Right ventricle myocardium inferior (tissue), 1 donor: ENCODE measurements at regions of chr1 and their contacts with region 1.

Region 1: DNA sequence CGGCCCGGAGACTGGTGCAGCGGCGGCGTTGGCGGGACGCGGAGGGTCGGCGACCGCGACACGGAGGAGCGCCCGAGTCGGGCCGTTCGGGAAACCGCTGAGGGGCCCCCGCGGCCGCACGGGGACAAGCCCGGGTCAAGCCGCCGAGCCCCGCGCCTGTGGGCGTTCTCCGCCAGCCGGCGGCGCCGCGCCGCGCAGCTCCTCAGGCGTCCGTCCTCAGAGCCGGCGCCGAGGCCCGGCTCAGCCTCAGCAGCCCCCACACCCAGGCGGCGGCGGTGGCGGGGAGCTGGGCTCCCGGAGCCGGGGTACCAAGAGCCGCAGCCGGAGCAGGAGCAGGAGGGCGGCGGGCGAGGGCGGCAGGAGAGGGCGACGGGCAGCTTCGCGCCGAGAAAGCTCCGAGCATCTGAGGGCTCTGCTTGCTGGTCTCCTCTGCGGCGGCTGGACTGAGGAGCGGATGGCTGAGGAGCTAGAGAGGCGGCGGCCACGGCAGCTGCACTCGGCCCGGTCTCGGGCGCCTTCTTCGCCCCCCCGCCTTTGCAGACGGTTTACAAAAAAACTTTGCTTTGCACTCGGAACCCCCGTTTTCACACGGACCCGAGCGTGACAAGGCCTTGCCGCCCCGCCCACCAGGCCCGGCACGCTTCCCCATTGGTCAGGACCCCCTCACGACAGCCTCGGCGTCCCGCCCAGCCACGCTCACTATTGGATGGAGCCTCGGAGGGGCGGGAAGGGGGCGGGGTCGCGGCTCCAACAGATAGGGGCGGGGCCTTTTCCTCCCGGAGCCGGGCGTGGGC is at the start of gene SLC30A1:
- DNase-seq: peak; percentile 100
- ATAC-seq: peak; percentile 97
- total RNA-seq, gene SLC30A1: 11.5 TPM

Region 2: DNA sequence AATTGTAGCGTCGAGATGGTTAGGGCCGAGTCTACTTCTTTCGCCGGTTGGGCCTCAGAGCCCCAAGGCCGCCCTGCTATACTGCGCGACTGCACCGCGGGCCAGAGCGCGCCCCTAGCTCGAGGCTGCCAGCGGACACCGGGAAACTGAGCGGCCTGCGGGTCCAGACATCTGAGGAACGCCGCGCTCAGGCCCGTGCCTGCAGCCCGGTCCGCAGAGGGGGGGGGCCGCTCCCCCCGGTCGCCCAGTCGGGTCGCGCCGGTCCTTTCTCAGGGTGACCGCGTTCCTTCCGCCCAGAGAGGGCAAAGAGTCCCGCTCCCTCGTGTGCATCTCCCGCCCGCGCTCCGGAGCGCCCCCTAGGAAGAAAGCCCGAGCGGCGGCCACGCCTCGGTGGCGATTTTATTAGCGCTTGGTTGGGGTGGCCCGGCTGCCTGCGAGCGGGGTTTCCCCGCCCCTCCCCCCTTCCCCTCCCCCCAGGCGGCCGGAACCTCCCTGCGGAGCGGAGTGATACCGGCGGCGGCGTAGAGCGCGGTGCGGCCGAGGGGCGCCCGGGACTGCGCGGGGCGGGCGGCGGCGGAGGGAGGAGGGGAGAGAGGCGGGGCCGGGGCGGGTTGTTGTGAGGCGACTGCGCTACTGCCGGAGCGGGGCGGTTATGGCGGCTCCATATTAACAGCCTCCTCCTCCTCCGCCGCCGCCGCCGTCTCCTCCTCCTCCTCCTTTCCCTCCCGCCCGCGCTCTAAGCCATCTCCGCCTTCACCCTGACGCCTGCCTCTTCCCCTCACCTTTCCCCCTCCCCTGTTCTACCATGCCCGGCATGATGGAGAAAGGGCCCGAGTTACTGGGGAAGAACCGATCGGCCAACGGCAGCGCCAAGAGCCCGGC is 319.8 kb before region 1 on chr1 and contains the start of gene RCOR3:
- intact Hi-C with region 1: loop called (anchors 2 kb)
- DNase-seq: peak; percentile 97
- ATAC-seq: peak; percentile 93
- total RNA-seq, gene RCOR3: 46.5 TPM

Region 3: DNA sequence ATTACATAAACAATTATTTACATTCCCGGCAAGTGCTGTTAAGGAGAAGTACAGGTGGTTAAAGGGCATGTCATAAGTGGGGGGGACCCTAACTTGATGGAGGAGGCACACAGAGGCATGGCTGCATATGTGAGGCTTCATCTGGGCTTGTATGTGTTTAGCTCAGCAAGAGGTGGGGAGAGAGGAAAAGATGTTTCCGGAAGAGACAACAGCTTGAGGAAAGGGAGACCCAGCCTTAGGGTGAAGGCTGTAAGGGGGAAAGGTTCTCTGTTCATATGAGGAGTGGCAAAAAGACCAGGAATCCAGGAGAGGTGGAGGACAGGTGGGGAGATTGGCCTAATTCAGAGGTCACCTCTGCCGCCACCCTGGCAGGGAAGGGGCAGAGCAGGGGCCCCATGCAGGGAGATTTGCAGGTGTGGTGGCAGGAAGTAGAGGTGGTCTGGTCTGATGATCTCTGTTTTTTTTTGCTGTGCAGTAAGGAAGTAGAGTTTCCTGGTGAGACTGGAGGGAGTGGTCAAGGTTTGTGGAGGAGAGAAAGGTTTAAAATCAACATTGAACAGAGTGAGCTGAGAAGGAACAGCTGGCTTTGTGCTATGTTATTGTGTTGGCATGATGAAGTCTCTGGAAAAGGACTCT is 243.2 kb before region 1 on chr1:
- intact Hi-C with region 1: no loop called
- DNase-seq: no peak
- ATAC-seq: no peak

Region 4: DNA sequence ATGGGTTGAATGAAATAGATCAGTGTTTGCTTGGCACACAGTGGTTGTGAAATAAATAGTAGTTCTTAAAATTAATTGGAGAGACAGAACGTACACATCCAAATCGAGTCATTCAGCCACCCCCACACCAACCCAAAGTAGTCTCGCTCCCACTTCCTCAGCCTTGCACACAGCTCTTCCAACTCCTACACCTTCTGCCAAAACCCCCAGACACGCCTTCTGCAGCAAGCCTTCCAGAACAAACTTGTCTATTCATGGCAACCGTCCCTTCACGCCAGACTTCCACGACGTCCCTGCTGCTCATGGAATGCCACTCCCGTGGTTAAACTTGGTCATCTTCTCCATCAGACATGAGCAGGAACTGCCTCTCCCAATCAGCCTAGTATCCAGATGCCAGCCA is 49.4 kb before region 1 on chr1:
- intact Hi-C with region 1: no loop called
- DNase-seq: no peak
- ATAC-seq: no peak

Region 5: DNA sequence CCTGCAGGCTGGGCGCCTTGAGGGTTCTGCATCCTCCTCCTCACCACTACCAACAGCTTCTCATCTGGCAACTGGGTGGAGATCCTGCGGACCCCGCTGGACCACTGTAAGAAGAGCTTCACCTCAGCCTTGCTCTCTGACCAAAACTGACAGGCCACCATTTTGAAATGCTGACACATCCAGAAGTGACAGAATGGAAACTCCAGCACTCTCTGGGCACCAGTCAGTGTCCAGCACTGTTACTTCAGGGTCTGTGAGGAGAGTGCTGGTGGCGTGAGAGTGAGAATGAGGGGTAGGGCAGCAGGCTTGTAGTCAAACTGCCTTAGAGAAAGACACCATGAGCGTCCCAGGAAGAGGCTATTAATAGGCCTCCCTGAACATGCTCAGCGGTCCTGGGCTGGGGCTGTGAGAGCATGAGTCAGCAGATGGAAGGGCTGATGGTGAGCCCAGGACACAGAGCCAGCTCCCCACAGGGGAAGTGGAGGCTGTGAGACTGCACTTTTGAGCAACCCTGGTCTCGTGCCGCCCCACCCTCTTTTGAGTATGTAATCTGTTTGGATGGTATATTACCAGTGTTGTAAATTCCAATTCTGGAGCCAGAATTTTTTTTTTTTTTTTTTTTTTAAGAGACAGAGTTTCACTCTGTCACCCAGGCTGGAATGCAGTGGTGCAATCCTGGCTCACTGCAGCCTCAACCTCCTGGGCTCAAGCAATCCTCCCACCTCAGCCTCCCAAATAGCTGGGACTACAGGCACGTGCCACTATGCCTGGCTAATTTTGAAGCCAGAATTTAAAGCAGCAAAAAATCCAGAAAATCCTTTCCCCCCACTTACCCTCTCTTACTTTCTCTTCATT is 34.5 kb after region 1 on chr1:
- intact Hi-C with region 1: loop called (anchors 2 kb)
- DNase-seq: peak; percentile 91
- ATAC-seq: peak; percentile 85

Region 6: GRCh38 chr1:211632631-211633523 is 54.0 kb after region 1 on chr1:
- intact Hi-C with region 1: loop called (anchors 5 kb)
- DNase-seq: peak; percentile 85
- ATAC-seq: peak; percentile 84

Region 7: GRCh38 chr1:211654838-211655787 is 76.3 kb after region 1 on chr1:
- intact Hi-C with region 1: loop called (anchors 1 kb)
- DNase-seq: peak; percentile 93
- ATAC-seq: peak; percentile 95

Region 8: GRCh38 chr1:211680752-211681327 is 102.0 kb after region 1 on chr1:
- intact Hi-C with region 1: no loop called
- DNase-seq: peak; percentile 74
- ATAC-seq: peak; percentile 92

Region 9: GRCh38 chr1:211859405-211859804 is 280.6 kb after region 1 on chr1:
- intact Hi-C with region 1: no loop called
- DNase-seq: no peak
- ATAC-seq: no peak